Sciatic nerve (tissue), 2 donors: ENCODE measurements at regions of chr16 and their contacts with region 1.

Region 1: GRCh38 chr16:59210955-59211541 is 476.9 kb upstream of the GOT2 start:
- DNase-seq: no peak
- ATAC-seq: peak; percentile 96

Region 2: DNA sequence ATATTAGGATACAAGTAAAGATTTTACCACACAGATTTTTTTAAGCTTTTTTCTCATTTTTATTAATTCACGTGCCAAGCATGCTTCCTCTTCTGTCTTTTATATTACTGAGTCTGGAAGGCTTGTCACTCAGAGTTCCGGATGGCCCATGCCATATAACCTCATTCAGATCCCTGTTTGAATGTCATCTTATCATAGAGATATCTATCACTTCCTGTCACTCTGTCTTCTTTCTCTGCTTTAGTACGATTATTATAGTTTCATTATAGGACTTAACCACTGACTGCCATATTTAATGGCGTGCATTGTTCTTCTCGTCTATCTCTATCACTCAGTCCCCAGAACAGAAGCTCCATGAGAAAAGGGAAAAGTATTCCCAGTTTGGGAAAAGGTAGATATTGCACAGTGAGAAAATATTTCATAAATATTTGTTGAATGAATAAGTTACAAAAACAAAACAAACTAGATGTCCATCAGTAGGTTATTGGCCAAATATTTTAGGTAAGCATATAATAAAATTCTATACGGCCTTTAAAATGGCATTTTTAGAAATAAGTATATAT is 180.0 kb before region 1 on chr16:
- intact Hi-C with region 1: no loop called
- DNase-seq: no peak
- ATAC-seq: no peak

Region 3: GRCh38 chr16:59913666-59914065 is 702.6 kb after region 1 on chr16:
- intact Hi-C with region 1: loop called (anchors 5 kb)
- DNase-seq: no peak
- ATAC-seq: no peak